ENCODE measurements at regions of chr14 and their contacts with region 1.

Region 1: GRCh38 chr14:38016497-38016896 is 191.2 kb upstream of the SSTR1 start:
- DNase-seq: no peak
- H3K4me3 ChIP-seq: no peak overlapping the region
- H3K27ac ChIP-seq: no peak overlapping the region
- H3K4me1 ChIP-seq: no peaks in the 10 kb centered on the region; a peak in 1 of 7 replicates
- H3K27me3 ChIP-seq: no peaks in the 10 kb centered on the region
- CTCF ChIP-seq: peak; percentile 12 to 59 (median 33); a peak in 3 of 4 replicates
- EP300 ChIP-seq: no peak
- POLR2A ChIP-seq: no peak
- RAD21 ChIP-seq: peak in 1 of 2 experiments; percentile 43; a peak in 2 of 4 replicates

Region 2: GRCh38 chr14:37903343-37904191 is 112.9 kb before region 1 on chr14:
- CTCF ChIA-PET with region 1: interaction called, 10 read pairs
- POLR2A ChIA-PET with region 1: no interaction called
- DNase-seq: no peak
- H3K4me3 ChIP-seq: no peak overlapping the region
- H3K27ac ChIP-seq: no peak overlapping the region
- H3K4me1 ChIP-seq: peaks cover 0 to 2% (median 0%) of the 10 kb centered on the region in 4 experiments; a peak in 1 of 7 replicates
- H3K27me3 ChIP-seq: peaks cover 0 to 5% (median under 1%) of the 10 kb centered on the region in 4 experiments; a peak in 2 of 7 replicates
- CTCF ChIP-seq: peak in 2 of 3 experiments; percentile 50 to 54; a peak in 3 of 4 replicates
- EP300 ChIP-seq: no peak
- POLR2A ChIP-seq: no peak
- RAD21 ChIP-seq: peak; percentile 79 to 82

Region 3: GRCh38 chr14:37985826-37986470 is 30.5 kb before region 1 on chr14:
- CTCF ChIA-PET with region 1: interaction called, 11 read pairs
- POLR2A ChIA-PET with region 1: no interaction called
- DNase-seq: no peak
- H3K4me3 ChIP-seq: no peak overlapping the region
- H3K27ac ChIP-seq: no peak overlapping the region
- H3K4me1 ChIP-seq: peaks cover 0 to 5% (median 0%) of the 10 kb centered on the region in 4 experiments; a peak in 1 of 7 replicates
- H3K27me3 ChIP-seq: no peaks in the 10 kb centered on the region
- CTCF ChIP-seq: peak in 2 of 3 experiments; percentile 53 to 86; a peak in 3 of 4 replicates
- EP300 ChIP-seq: no peak
- POLR2A ChIP-seq: no peak
- RAD21 ChIP-seq: peak; percentile 70 to 75

Region 4: DNA sequence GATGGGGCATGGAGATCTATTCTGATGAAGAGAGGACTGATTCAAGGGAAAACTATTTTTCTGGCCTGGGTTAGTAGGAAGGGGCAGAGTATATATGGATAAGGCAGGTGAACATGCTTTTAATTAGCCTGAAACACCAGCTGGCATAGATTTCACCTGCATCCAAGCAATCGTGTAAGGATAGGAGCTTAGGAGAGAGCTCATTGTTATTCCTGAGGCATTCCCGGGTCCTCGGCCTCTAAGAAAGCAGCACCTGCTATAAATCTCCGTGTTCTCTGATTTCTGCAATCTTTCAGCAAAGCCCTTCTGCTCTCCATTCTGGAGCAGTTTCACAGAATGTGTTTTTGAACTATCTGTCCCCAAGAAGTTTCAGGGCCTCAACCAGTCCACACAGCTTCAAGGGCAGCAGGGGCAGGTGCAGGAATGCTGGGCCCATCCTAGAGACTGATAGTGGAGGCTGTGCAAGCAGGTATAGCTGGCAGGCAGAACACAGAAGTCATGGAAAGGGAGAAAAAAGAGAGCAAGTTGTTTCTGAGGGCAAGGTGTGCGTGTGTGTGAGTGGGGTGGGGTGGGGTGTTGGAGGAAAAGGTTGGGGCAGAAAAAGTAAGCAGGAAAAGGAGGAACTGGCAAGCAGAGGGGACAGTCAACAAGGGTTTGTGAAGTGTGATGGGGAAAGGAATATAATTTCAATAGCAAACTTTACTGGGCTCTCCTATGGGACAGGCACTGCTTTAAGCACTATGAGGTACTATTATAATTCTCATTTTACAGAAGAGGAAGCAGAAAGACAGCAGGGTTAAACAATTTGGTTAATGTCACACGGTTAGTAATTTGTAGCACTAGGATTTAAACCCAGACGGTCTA is 12.5 kb before region 1 on chr14:
- CTCF ChIA-PET with region 1: interaction called, 19 read pairs
- POLR2A ChIA-PET with region 1: no interaction called
- DNase-seq: no peak
- H3K4me3 ChIP-seq: no peak overlapping the region
- H3K27ac ChIP-seq: no peak overlapping the region
- H3K4me1 ChIP-seq: peaks cover 2 to 8% (median 3%) of the 10 kb centered on the region in 4 experiments; a peak in 4 of 7 replicates
- H3K27me3 ChIP-seq: no peaks in the 10 kb centered on the region
- CTCF ChIP-seq: no peak
- EP300 ChIP-seq: no peak
- POLR2A ChIP-seq: no peak
- RAD21 ChIP-seq: no peak